Right ventricle myocardium superior (tissue), 1 donor: ENCODE measurements at regions of chr2 and their contacts with region 1.

Region 1: DNA sequence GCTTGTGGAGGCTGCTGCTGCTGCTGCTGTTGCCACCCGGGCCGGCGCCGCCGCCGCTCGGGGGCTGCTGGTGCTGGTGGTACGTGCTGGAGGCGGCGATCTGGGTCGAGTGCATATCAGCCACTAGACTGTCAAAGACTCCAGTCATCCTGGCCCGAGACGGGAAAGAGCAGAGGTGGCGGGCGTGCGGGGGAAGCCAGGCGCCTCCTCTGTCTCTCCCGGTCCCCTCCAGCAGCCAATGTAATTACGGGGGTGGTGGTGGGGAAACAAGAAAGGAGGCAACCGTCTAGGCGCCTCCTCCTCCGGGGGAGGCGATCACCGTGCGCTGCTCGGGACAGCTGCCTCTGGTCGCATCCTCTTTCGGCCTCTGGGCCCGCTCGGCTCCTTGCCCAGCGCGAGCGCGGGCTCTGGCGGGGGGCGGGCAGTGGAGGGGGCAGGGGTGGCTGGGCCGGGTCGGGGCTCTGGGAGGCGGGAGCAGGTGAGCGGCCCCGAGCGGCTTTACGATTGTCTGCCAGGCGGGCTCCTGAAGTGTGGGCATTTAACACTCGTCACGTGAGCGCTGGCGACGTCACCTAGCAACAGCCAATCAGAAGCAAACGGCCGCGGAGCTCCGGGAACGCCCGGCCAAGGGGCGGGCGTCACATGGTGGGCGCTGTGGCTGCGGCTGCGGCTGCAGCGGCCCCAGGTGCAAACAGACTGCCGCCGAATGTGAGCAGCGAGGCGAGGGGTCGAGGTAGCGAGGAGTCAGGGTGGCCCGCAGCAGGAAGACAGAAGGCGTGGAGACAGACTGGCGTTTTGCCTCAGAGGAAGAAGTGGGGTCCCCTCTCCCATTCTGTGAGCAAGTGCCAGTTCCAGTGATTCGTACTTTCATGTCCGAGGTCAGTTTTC is at the start of gene DLX2:
- DNase-seq: peak; percentile 84
- ATAC-seq: peak; percentile 78
- total RNA-seq, gene DLX2: not detected

Region 2: DNA sequence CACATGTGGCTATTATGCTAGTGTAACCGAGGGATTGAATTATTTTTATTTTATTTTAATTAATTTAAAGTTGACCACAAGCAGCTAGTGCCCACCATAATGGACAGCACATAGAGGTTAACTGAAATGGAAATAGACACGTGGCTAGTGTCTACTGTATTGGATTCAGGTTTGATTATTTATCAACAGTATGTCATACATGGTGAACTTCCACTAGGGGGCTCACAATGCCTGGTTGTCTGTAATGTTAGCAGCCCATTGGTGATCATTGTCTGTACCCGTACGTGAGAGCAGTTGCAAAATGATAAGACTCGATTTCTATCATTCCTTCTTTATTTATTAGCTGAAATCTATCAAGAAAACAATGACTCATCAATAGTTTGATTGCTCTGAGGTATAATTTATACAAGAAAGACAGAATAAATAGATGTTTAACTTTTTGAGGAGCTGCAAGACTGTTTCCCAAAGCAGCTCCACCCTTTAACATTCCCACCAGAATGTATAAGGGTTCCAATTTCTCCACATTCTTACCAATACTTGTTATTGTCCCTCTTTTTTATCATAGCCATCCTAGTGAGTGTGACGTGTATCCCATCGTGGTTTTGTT is 503.8 kb before region 1 on chr2:
- intact Hi-C with region 1: loop called (anchors 10 kb)
- DNase-seq: no peak
- ATAC-seq: peak; percentile 75

Region 3: DNA sequence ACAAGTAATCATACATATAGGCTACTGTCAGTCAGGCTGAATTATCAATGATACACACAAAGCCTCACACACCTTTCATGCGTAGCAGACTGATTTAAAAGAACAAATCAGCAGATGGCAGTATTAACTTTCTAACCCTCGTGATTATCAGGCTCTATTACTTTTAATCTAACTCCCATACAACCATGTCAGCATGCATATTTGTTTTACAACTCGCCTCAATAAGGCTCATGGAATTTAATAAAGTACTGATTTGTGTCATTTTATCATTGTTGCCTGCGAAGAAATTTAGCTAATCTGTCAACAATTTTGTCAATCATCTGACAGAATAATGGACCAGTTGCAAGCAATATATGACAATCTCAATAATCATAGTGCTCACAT is 291.4 kb before region 1 on chr2:
- intact Hi-C with region 1: loop called (anchors 10 kb)
- DNase-seq: no peak
- ATAC-seq: peak; percentile 50

Region 4: GRCh38 chr2:172465417-172466334 is 363.0 kb after region 1 on chr2:
- intact Hi-C with region 1: no loop called
- DNase-seq: peak; percentile 50
- ATAC-seq: peak; percentile 81

Region 5: DNA sequence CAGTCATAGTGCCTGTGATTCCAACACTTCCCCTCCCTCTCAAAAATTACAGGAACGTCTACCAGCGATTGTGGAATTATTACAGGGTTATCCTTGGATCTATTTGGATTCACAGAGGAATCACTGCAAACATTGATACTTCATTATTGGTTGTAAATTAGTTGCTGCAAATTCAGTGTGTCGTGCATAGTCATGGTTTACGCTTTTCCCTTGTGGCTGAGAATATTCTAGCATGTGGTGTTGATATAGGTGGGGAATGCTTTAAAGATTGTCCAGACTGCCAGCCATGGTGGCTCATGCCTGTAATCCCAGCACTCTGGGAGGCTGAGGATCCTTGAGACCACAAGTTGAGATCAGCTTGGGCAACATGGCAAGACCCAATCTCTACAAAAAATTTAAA is 404.6 kb after region 1 on chr2:
- intact Hi-C with region 1: no loop called
- DNase-seq: no peak
- ATAC-seq: no peak